A673 (cell line): ENCODE measurements at regions of chrX and their contacts with region 1.

Region 1: DNA sequence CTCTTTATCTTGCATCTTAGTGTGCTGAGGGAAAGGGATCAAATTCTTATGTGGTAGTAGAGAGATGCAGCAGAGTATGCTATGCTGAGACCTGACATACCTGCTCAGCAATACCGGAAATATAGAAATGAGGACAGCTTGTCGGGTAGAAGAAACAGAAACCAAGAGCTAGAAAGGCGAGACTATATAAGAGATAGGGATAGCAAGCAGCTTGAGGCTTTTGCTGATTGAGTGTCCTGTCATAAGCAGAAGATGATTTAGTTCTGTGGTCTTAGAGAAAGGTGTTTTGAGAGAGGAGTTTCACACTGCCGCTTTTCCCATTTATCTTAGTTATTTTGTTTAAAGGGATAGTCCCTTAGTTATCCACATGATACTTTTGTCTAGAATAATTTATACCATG is 31.7 kb downstream of the USP9X start:
- DNase-seq: peak; percentile 25
- H3K4me3 ChIP-seq: peak overlapping the region; percentile 14
- H3K27ac ChIP-seq: no peak overlapping the region
- H3K4me1 ChIP-seq: peaks cover 31% of the 10 kb centered on the region
- H3K27me3 ChIP-seq: no peaks in the 10 kb centered on the region
- CTCF ChIP-seq: no peak

Region 2: DNA sequence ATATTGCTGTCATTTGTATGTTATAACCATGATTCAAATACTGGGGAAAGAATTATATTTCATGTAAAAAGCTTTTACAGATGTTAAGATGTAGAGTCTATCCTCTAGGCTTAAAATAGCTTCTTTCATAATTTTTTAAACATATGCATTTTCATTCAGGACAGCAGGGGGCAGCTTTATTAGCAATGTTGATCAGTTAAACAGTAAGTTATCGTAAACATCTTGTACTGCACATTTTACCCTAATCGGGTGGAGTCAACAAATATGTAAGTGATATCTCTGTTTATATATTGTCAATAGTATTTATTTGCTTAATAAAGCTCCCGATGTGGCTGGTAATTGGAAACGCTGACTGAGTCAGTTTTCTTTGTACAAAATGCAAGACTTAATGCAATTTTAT is 239.1 kb before region 1 on chrX:
- CTCF ChIA-PET with region 1: interaction called, 15 read pairs
- POLR2A ChIA-PET with region 1: no interaction called
- intact Hi-C with region 1: loop called (anchors 5 kb)
- DNase-seq: peak; percentile 35
- H3K4me3 ChIP-seq: no peak overlapping the region
- H3K27ac ChIP-seq: no peak overlapping the region
- H3K4me1 ChIP-seq: no peaks in the 10 kb centered on the region
- H3K27me3 ChIP-seq: no peaks in the 10 kb centered on the region
- CTCF ChIP-seq: peak; percentile 56

Region 3: DNA sequence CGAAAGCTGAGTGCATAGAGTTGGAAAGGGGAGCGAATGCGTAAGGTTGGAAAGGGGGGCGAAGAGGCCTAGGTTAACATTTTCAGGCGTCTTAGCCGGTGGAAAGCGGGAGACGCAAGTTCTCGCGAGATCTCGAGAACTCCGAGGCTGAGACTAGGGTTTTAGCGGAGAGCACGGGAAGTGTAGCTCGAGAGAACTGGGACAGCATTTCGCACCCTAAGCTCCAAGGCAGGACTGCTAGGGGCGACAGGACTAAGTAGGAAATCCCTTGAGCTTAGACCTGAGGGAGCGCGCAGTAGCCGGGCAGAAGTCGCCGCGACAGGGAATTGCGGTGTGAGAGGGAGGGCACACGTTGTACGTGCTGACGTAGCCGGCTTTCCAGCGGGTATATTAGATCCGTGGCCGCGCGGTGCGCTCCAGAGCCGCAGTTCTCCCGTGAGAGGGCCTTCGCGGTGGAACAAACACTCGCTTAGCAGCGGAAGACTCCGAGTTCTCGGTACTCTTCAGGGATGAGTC is 216.9 kb after region 1 on chrX and contains the start of gene DDX3X:
- CTCF ChIA-PET with region 1: interaction called, 4 read pairs
- POLR2A ChIA-PET with region 1: interaction called, 13 read pairs
- intact Hi-C with region 1: no loop called
- DNase-seq: peak; percentile 93
- H3K4me3 ChIP-seq: peak within 1 kb of the TSS; percentile 81
- H3K27ac ChIP-seq: peak within 1 kb of the TSS; percentile 100
- H3K4me1 ChIP-seq: peaks cover 47% of the 10 kb centered on the region
- H3K27me3 ChIP-seq: no peaks in the 10 kb centered on the region
- CTCF ChIP-seq: 0 out of 2 replicates have a peak, but pooled peaks have one; percentile 20
- total RNA-seq, gene DDX3X: 408 and 454 TPM in 2 replicates

Region 4: DNA sequence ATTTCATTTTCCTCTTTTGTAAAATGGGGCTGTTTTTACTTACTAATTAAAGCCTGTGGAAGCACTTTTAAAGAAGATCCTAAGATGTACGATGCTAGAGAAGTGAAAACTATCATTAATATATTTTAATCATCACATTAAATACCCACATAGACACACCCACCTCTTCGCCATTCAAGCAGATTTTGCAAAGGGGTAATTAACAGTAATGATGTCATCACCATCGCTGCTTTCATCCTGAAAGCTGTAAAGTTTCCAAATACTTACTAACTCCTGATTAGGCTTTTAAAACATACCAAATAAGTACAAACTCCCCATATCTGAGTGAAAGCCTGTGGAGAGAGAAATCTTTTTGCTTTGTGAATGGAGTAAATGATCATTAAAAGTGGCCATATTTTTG is 312.6 kb after region 1 on chrX:
- CTCF ChIA-PET with region 1: no interaction called
- POLR2A ChIA-PET with region 1: no interaction called
- intact Hi-C with region 1: no loop called
- DNase-seq: no peak
- H3K4me3 ChIP-seq: no peak overlapping the region
- H3K27ac ChIP-seq: no peak overlapping the region
- H3K4me1 ChIP-seq: no peaks in the 10 kb centered on the region
- H3K27me3 ChIP-seq: no peaks in the 10 kb centered on the region
- CTCF ChIP-seq: no peak